Astrocyte of the cerebellum (primary cell): ENCODE measurements at regions of chr4 and their contacts with region 1.

Region 1: GRCh38 chr4:24032371-24032989 is 142.6 kb upstream of the PPARGC1A start:
- DNase-seq: no peak
- H3K4me3 ChIP-seq: no peak overlapping the region
- CTCF ChIP-seq: peak; percentile 17

Region 2: GRCh38 chr4:23966725-23967124 is 65.8 kb before region 1 on chr4:
- in situ Hi-C with region 1: loop called (anchors 5 kb)
- DNase-seq: no peak
- H3K4me3 ChIP-seq: no peak overlapping the region
- CTCF ChIP-seq: peak; percentile 33

Region 3: DNA sequence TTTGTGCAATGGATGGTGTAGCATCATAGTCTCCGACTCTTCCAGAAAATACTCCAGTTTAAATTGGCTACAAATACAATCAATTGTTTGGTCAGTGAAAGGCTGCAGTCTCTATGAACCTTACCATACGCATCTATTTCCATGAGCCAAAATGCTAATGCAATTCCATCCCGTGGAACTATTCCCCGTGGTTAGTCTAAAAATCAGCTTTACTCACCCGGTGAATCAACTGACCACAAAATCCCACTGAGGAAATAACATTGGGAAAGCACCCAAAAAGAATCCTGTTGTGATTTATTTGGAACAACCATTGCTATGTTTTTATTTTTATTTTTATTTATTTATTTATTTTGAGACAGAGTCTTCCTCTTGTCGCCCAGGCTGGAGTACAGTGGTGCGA is 464.7 kb after region 1 on chr4:
- in situ Hi-C with region 1: no loop called
- DNase-seq: no peak
- H3K4me3 ChIP-seq: no peak overlapping the region
- CTCF ChIP-seq: no peak